ENCODE measurements at regions of chr3 and their contacts with region 1.

Region 1: GRCh38 chr3:11954312-11954934 is 49.8 kb upstream of the SYN2 start:
- DNase-seq: no peak
- ATAC-seq: no peak
- H3K4me3 ChIP-seq: no peak overlapping the region
- H3K27ac ChIP-seq: no peak overlapping the region
- H3K4me1 ChIP-seq: no peaks in the 10 kb centered on the region
- H3K27me3 ChIP-seq: no peaks in the 10 kb centered on the region
- CTCF ChIP-seq: no peak

Region 2: GRCh38 chr3:11539218-11539617 is 415.2 kb before region 1 on chr3:
- CTCF ChIA-PET with region 1: no interaction called
- POLR2A ChIA-PET with region 1: interaction called, 10 read pairs
- in situ Hi-C with region 1: no loop called
- intact Hi-C with region 1: no loop called
- DNase-seq: no peak
- ATAC-seq: no peak
- H3K4me3 ChIP-seq: no peak overlapping the region
- H3K27ac ChIP-seq: 0 out of 2 replicates have a peak overlapping the region, but pooled peaks have one; percentile 12
- H3K4me1 ChIP-seq: peaks cover 8% of the 10 kb centered on the region
- H3K27me3 ChIP-seq: no peaks in the 10 kb centered on the region
- CTCF ChIP-seq: no peak

Region 3: DNA sequence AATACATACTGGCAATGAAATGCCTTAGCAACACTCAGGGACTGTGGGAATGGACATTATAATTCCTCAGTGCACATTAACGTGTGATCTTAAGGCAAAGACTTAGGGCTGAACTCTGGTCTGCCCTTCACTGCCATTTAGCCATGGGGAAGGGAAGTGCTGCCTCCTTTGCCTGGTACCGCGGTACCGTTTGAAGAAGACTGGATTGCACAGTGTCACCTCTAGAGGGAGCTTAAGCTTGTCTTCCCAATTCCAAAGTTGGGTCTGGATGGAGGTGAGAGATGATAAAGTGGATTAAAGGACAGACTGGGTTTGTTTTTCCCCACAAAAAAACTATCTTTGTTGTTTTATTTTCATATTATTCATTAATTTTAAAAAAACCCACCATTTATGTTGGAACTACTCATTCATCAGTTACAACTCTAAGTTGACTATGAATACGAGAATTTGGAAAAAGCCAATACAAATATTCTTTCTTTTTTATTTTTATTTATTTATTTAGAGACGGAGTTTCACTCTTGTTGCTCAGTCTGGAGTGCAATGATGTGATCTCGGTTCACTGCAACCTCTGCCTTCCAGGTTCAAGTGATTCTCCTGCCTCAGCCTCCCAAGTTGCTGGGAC is 10.3 kb before region 1 on chr3:
- CTCF ChIA-PET with region 1: interaction called, 17 read pairs
- POLR2A ChIA-PET with region 1: no interaction called
- in situ Hi-C with region 1: no loop called
- intact Hi-C with region 1: no loop called
- DNase-seq: peak; percentile 4
- ATAC-seq: peak; percentile 97
- H3K4me3 ChIP-seq: no peak overlapping the region
- H3K27ac ChIP-seq: no peak overlapping the region
- H3K4me1 ChIP-seq: no peaks in the 10 kb centered on the region
- H3K27me3 ChIP-seq: no peaks in the 10 kb centered on the region; the same call in 1 of the 2 replicates
- CTCF ChIP-seq: peak; percentile 83